ENCODE measurements at regions of chr13 and their contacts with region 1.

Region 1: DNA sequence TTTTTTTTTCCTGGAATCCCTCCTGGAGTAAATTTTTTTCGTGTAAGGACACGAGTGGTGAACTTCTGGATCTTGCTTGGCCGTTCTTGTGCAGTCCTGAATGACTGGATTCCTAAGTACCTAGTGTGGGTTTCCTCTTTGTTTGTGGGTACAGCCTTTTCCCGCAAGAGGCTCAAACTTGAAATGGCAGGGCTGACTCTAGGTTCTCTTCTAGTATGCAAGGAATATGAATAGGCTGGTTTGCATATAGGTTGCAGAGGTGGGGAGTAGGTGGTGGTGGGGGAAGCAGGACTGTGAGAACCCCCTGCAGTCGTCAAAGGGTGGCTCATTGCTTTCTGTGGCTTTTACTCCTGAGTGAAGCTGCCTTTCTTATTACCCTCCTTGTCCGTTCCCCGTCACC is 13.6 kb downstream of the UBAC2 start:
- DNase-seq: peak in 4 of 9 donors; percentile 34 to 53 (median 46)
- ATAC-seq: no peak
- H3K4me3 ChIP-seq: peak overlapping the region; percentile 53
- H3K4me3 Mint-ChIP-seq: peak overlapping the region; percentile 69 to 95 (median 92)
- H3K27ac ChIP-seq: peak overlapping the region; percentile 85
- H3K27ac Mint-ChIP-seq: peak overlapping the region; percentile 94 to 100 (median 99)
- H3K4me1 ChIP-seq: peaks cover 46 to 67% of the 10 kb centered on the region in 2 donors
- H3K4me1 Mint-ChIP-seq: peaks cover 49 to 93% (median 79%) of the 10 kb centered on the region in 7 donors
- H3K27me3 ChIP-seq: no peaks in the 10 kb centered on the region
- H3K27me3 Mint-ChIP-seq: no peaks in the 10 kb centered on the region

Region 2: GRCh38 chr13:99057310-99057975 is 156.8 kb before region 1 on chr13:
- CTCF ChIA-PET with region 1: no interaction called
- POLR2A ChIA-PET with region 1: no interaction called
- intact Hi-C with region 1: loop called in 1 of 2 experiments (anchors 5 kb)
- DNase-seq: no peak
- ATAC-seq: no peak
- H3K4me3 ChIP-seq: no peak overlapping the region
- H3K4me3 Mint-ChIP-seq: peak overlapping the region in 2 of 10 donors; percentile 8 to 50
- H3K27ac ChIP-seq: no peak overlapping the region
- H3K27ac Mint-ChIP-seq: peak overlapping the region in 8 of 9 donors; percentile 7 to 96 (median 74)
- H3K4me1 ChIP-seq: peaks cover 28 to 78% of the 10 kb centered on the region in 2 donors
- H3K4me1 Mint-ChIP-seq: peaks cover 46 to 99% (median 94%) of the 10 kb centered on the region in 7 donors
- H3K27me3 ChIP-seq: no peaks in the 10 kb centered on the region
- H3K27me3 Mint-ChIP-seq: peaks cover 0 to 19% (median 0%) of the 10 kb centered on the region in 5 donors

Region 3: DNA sequence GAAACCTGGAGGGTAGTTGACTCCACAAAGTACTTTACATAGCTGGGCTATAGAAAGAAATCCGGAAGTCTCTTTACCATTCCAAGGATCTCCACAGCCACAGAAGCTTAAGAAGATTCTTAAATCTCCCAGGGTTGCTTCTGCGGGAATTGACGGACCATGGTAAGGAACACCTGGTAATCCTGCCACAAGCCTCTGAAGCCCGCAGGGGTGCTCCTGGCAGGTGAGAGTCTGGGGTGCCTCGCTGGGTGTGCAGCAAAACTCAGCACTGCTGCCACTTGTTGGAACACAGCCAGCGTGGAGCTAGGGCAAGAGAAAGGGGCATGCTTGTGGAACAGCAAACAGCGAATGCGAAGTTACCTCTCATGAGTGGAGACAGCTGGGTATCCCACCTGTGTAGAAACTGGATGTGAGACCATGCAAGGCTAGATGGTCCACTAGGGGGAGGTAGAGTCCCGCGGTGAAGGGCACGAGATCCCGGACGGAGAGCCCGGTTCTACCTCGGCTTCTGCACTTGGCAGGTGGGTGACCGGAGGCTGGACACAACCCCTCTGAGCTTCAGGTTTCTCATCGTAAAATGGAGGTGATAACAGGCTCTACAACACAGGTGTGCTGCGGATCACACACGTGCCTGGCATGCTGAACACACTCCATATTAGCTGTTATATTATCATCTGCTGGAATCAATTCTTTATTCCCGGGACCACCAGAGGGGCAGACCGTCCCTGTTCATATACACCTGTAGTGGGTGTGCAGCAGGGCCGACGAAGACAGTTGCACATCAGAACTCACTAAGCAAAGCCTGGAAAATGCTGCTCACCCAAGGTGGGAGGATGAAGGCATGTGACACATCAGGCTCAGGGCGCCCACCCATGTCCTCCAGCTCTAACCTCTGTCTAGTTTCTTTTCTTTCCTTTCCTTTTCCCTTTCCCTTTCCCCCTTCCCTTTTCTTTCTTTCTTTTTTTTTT is 37.6 kb before region 1 on chr13:
- CTCF ChIA-PET with region 1: interaction called, 3 read pairs
- POLR2A ChIA-PET with region 1: interaction called, 3 read pairs
- intact Hi-C with region 1: loop called in 1 of 2 experiments (anchors 2 kb)
- DNase-seq: peak; percentile 54 to 79 (median 71)
- ATAC-seq: peak; percentile 95
- H3K4me3 ChIP-seq: peak overlapping the region; percentile 1
- H3K4me3 Mint-ChIP-seq: peak overlapping the region; percentile 39 to 81 (median 72)
- H3K27ac ChIP-seq: no peak overlapping the region
- H3K27ac Mint-ChIP-seq: peak overlapping the region in 8 of 9 donors; percentile 34 to 77 (median 54)
- H3K4me1 ChIP-seq: peaks cover 22 to 24% of the 10 kb centered on the region in 2 donors
- H3K4me1 Mint-ChIP-seq: peaks cover 26 to 44% (median 39%) of the 10 kb centered on the region in 7 donors
- H3K27me3 ChIP-seq: no peaks in the 10 kb centered on the region
- H3K27me3 Mint-ChIP-seq: peaks cover 0 to 13% (median 0%) of the 10 kb centered on the region in 5 donors

Region 4: DNA sequence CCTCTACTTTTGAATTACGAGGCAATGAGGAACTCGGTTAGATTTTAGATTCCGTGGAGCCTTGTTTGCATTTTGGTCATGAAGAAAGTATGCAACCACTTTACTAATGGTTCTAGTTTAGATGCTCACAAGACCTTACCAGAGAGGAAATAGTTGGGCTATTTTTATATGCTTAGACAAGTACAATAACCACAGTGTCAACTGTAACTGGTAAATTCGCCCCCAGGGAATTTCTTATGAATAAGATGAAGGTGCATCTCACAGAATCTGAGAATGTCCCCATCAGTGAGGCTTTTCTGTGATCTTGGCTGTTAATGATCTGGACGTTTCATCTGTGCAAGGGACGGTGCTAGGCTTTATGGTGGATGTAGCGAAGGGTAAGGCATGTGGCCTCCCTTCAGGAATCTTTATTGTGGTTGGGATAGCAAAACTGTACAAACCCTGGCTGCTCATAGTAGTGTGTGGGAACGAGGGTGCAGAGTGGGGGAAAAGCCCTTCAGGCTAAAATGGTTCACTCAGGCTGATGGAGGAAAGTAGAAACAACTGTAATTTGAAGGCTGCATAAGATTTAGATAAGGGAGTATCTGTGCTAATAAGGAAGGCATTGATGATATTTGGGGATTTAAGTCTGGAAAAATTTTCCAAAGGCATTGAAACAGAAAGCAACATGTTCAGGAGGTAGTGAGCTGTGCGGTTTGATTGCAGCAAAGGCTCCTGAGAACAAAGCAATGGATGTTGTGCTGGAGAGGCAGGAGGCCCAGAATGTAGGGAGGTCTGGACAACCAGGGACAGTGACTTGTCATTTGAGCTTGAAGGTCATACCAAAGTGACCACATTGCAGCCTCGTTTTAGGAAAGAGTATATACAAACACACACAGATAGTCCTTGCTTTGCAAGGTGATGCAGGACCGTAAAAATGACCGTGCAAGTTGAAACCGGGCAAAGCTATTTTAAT is 14.8 kb after region 1 on chr13:
- CTCF ChIA-PET with region 1: interaction called, 4 read pairs
- POLR2A ChIA-PET with region 1: interaction called, 28 read pairs
- intact Hi-C with region 1: loop called in 1 of 2 experiments (anchors 1 kb)
- DNase-seq: no peak
- ATAC-seq: peak; percentile 48
- H3K4me3 ChIP-seq: peak overlapping the region; percentile 43
- H3K4me3 Mint-ChIP-seq: peak overlapping the region; percentile 60 to 86 (median 80)
- H3K27ac ChIP-seq: peak overlapping the region; percentile 35
- H3K27ac Mint-ChIP-seq: peak overlapping the region; percentile 55 to 94 (median 80)
- H3K4me1 ChIP-seq: peaks cover 55 to 60% of the 10 kb centered on the region in 2 donors
- H3K4me1 Mint-ChIP-seq: peaks cover 56 to 89% (median 70%) of the 10 kb centered on the region in 7 donors
- H3K27me3 ChIP-seq: no peaks in the 10 kb centered on the region
- H3K27me3 Mint-ChIP-seq: no peaks in the 10 kb centered on the region

Region 5: DNA sequence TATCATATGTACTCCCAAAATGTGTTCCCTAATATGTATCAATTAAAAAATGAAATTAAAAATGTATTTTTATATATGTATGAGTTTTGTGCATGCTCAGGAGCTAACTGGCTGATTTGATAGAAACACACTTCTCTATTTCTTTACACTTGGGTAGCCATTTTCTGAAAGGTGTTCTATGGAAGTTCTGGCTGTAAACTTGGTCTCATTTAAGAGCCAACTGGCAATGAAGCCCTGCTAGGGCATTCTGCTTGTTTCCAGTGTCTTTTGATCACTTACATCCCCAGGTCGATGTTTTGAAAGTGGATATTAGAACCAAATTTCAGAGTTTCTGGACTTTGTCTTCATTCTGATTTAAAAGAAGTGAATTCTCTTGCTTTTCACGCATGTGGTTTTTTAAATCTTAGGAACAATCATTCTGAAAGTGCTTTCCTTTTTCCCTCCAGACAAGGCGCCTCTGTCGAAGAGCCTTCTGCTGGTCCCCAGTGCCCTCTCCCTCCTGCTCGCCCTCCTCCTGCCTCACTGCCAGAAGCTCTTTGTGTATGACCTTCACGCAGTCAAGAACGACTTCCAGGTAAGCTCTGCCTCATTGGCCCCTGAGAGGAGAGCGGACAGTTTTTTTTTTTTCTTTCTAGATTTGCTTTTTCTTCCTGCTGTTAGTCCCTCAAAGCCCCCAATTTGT is 23.9 kb after region 1 on chr13:
- CTCF ChIA-PET with region 1: interaction called, 3 read pairs
- POLR2A ChIA-PET with region 1: interaction called, 28 read pairs
- intact Hi-C with region 1: loop called (anchors 1 kb)
- DNase-seq: peak in 4 of 9 donors; percentile 19 to 40 (median 30)
- ATAC-seq: peak; percentile 74
- H3K4me3 ChIP-seq: peak overlapping the region; percentile 26
- H3K4me3 Mint-ChIP-seq: peak overlapping the region; percentile 74 to 95 (median 85)
- H3K27ac ChIP-seq: peak overlapping the region; percentile 81
- H3K27ac Mint-ChIP-seq: peak overlapping the region; percentile 86 to 100 (median 97)
- H3K4me1 ChIP-seq: peaks cover 11 to 20% of the 10 kb centered on the region in 2 donors
- H3K4me1 Mint-ChIP-seq: peaks cover 35 to 81% (median 72%) of the 10 kb centered on the region in 7 donors
- H3K27me3 ChIP-seq: no peaks in the 10 kb centered on the region
- H3K27me3 Mint-ChIP-seq: no peaks in the 10 kb centered on the region